Body of pancreas (tissue), 4 donors: ENCODE measurements at regions of chr15 and their contacts with region 1.

Region 1: DNA sequence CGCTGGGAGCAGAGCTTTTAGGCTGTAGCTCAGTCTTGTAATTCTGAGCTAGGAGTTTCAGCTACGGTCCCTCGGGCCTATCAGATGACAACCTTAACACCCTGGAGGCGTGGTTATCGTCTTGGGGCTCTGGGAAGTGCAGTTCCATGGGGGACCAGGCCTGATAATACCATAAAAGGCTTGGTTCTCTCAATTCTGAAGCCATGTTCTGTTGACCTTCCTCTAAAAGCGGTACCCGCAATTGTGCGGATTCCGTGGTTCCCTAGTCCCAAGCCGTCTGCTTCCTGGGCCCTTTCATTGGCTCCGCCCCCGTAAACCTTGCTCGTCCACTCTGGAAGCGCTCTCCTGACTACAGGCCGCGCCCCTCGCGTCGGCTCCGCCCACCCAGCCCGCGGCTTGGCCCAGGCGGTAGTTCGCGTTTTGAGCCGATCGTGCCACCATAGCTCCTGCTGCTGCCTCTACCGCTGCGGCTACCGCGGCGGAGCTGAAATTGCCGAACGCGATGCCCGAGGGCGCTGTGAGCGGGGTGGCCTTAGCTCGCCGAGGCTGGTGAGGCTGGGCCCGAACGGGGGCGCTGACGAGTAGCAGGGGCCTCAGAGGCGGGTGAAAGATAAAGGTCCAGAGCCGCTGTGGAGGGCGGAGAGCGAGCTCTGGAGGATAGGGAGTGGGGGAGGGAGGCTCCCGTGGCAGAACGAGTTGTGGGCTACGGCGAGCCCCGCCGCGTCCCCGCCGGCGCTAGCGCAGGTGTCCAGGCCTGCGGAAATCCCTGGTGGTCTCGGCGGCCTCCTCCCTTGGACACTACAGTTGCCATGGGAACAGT is at the start of gene MAPKBP1:
- DNase-seq: peak; percentile 97 to 99 (median 98)
- ATAC-seq: peak; percentile 97
- H3K4me3 ChIP-seq: peak within 1 kb of the TSS; percentile 24 to 83
- H3K27ac ChIP-seq: peak within 1 kb of the TSS; percentile 69 to 91 (median 82)
- H3K4me1 ChIP-seq: peaks cover 37% of the 10 kb centered on the region
- H3K27me3 ChIP-seq: no peaks in the 10 kb centered on the region
- CTCF ChIP-seq: peak; percentile 24 to 81 (median 71)
- POLR2A ChIP-seq: peak; percentile 20 to 68 (median 60)
- total RNA-seq, gene MAPKBP1: 12.5 to 31.6 TPM

Region 2: GRCh38 chr15:41811432-41812195 is 37.3 kb after region 1 on chr15:
- intact Hi-C with region 1: loop called (anchors 5 kb)
- DNase-seq: peak; percentile 85 to 91 (median 86)
- ATAC-seq: peak; percentile 97
- H3K4me3 ChIP-seq: no peak overlapping the region
- H3K27ac ChIP-seq: no peak overlapping the region
- H3K4me1 ChIP-seq: no peaks in the 10 kb centered on the region
- H3K27me3 ChIP-seq: no peaks in the 10 kb centered on the region
- CTCF ChIP-seq: peak; percentile 73 to 93 (median 85)
- POLR2A ChIP-seq: no peak

Region 3: DNA sequence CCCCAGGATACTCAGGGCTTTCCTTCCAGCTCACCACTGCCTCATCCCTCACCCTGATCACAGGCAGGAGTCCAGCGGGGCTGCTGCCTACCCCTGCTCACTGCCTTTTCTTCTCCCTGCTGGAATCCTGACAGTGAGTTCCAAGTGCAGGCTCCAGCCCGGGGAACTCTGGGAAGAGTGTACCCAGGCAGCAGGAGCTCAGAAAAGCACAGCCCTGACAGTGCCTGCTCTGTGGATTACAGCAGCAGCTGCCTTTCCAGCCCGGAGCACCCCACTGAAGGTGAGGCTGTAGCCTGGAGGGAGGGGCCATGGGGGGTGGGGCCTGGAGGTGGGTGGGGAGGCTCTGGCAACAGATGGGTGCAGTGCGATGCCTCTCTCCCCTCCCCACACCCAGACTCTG is 47.6 kb after region 1 on chr15:
- intact Hi-C with region 1: no loop called
- DNase-seq: no peak
- ATAC-seq: no peak
- H3K4me3 ChIP-seq: no peak overlapping the region
- H3K27ac ChIP-seq: no peak overlapping the region
- H3K4me1 ChIP-seq: peaks cover 17% of the 10 kb centered on the region
- H3K27me3 ChIP-seq: no peaks in the 10 kb centered on the region
- CTCF ChIP-seq: no peak
- POLR2A ChIP-seq: no peak